CD4-positive, alpha-beta memory T cell (primary cell): ENCODE measurements at regions of chr10 and their contacts with region 1.

Region 1: DNA sequence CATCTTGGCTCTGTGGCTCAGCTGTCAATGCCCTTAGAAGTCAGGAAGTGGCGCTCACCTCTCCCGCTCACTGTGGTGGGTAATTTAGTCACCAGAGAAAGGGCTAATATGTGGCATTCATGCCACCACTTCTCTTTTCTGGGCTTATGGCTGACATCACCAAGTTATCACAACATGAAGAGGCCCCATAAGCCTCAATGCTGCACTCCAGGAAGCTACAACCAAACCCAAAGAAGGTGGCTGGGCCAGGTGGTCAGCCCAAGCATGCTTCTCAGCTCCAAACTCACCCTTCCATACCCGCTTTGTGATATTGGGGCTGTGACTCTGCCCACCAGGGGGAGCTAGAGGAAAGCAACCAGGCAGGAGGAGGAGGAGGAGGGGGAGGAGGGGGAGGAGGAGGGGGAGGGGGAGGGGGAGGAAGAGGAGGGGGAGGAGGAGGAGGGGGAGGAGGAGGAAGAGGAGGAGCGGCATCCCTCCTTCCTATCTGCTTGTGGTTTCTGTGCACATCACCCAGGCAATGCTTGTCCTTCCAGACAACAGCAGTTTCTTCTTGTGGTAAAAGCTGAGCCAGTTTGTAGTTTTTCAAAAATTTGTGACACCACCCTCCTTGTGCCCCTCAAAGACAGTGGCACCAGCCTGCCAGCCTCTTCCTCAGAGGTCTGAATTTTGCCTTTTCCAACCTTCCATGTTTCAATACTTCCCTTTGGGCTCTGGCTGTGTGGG is 42.1 kb downstream of the CYP26A1 start:
- DNase-seq: peak; percentile 64 to 75 (median 66)
- H3K4me3 ChIP-seq: no peak overlapping the region
- H3K4me3 Mint-ChIP-seq: peak overlapping the region in 3 of 8 donors; percentile 24 to 56 (median 34)
- H3K27ac ChIP-seq: no peak overlapping the region
- H3K27ac Mint-ChIP-seq: peak overlapping the region in 6 of 7 donors; percentile 29 to 80 (median 74)
- H3K4me1 ChIP-seq: peaks cover 14% of the 10 kb centered on the region
- H3K4me1 Mint-ChIP-seq: peaks cover 12 to 28% (median 17%) of the 10 kb centered on the region in 4 donors
- H3K27me3 ChIP-seq: no peaks in the 10 kb centered on the region
- H3K27me3 Mint-ChIP-seq: peaks cover 0 to 9% of the 10 kb centered on the region in 2 donors

Region 2: DNA sequence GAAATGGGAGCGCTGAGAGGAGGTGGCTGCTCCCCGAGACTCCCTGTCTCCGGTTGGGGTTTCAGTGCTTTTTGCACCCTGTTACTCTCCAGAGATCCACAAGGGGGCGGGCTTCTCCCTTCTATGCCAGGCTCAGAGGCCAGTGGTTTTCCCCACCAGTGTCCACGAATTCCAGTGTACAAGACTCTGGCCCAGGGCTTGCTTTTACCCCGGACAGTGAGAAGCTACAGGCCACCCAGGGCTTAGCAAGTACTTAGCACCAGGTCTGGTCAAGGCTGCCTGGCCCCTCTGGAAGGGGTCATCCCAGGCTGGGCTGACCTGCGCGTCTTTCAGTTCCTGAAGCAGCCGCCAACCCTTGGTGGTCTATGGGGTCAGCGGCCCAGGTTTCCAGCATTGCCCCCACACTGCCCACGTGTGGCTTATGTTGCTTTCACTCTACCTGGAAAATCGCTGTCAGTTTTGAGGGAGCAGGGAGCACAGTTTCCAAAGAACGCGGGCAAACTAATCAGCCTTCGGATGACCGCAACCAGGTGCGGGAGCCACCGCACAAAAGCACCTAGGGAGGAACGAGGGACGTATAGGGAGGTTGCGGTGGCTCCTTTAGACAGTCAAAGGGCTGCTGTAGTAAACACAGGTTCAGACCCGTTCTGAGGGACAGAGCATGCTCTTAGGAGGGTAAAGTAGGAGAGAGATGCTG is 35.3 kb before region 1 on chr10:
- CTCF ChIA-PET with region 1: interaction called, 15 read pairs
- POLR2A ChIA-PET with region 1: no interaction called
- intact Hi-C with region 1: no loop called
- DNase-seq: peak in 4 of 5 donors; percentile 43 to 47 (median 46)
- H3K4me3 ChIP-seq: no peak overlapping the region
- H3K4me3 Mint-ChIP-seq: peak overlapping the region in 4 of 8 donors; percentile 33 to 71 (median 62)
- H3K27ac ChIP-seq: no peak overlapping the region
- H3K27ac Mint-ChIP-seq: no peak overlapping the region
- H3K4me1 ChIP-seq: peaks cover 4% of the 10 kb centered on the region
- H3K4me1 Mint-ChIP-seq: peaks cover 2 to 10% (median 7%) of the 10 kb centered on the region in 4 donors
- H3K27me3 ChIP-seq: no peaks in the 10 kb centered on the region
- H3K27me3 Mint-ChIP-seq: peaks cover 17 to 39% of the 10 kb centered on the region in 2 donors

Region 3: DNA sequence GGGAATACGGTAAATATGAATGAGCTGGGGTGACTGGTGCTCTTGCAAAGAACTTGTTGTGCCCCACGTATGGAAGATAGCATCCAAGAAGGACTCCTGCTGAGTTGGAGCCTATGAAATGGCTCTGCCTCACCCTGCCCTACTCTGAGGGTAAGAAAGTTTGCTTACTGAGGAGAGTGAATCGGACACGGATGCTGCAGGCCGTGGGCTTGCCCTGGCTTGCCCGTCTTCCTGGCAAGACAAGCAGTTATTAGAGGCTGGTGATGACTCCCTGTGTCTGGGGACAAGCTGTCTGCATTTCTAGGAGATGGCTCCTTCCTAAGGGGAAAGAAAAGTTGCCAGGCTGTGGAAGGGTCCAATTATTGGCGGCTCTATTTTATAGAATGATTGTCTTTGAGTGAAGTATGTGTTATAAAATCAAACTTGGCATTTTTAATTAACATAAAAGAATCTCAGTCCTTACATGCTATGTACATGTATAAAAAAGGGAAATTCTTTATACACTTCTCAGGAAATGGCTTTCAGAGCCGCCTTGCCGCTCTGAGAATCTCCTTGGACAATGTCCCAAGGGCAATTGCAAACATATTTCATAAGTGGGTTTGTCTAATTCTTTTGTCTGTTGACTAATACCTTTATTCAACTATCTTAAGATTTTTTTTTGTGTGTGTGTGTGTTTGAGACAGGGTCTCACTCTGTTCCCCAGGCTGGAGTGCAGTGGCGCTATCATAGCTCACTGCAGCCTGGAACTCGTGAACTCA is 22.5 kb after region 1 on chr10:
- CTCF ChIA-PET with region 1: interaction called, 13 read pairs
- POLR2A ChIA-PET with region 1: no interaction called
- intact Hi-C with region 1: no loop called
- DNase-seq: no peak
- H3K4me3 ChIP-seq: no peak overlapping the region
- H3K4me3 Mint-ChIP-seq: no peak overlapping the region
- H3K27ac ChIP-seq: no peak overlapping the region
- H3K27ac Mint-ChIP-seq: no peak overlapping the region
- H3K4me1 ChIP-seq: no peaks in the 10 kb centered on the region
- H3K4me1 Mint-ChIP-seq: no peaks in the 10 kb centered on the region
- H3K27me3 ChIP-seq: no peaks in the 10 kb centered on the region
- H3K27me3 Mint-ChIP-seq: peaks cover 3 to 18% of the 10 kb centered on the region in 2 donors

Region 4: GRCh38 chr10:93152136-93152535 is 36.3 kb after region 1 on chr10:
- CTCF ChIA-PET with region 1: no interaction called
- POLR2A ChIA-PET with region 1: no interaction called
- intact Hi-C with region 1: no loop called
- DNase-seq: no peak
- H3K4me3 ChIP-seq: no peak overlapping the region
- H3K4me3 Mint-ChIP-seq: no peak overlapping the region
- H3K27ac ChIP-seq: no peak overlapping the region
- H3K27ac Mint-ChIP-seq: no peak overlapping the region
- H3K4me1 ChIP-seq: peaks cover 16% of the 10 kb centered on the region
- H3K4me1 Mint-ChIP-seq: peaks cover 12 to 22% (median 21%) of the 10 kb centered on the region in 4 donors
- H3K27me3 ChIP-seq: no peaks in the 10 kb centered on the region
- H3K27me3 Mint-ChIP-seq: peaks cover 6 to 10% of the 10 kb centered on the region in 2 donors

Region 5: GRCh38 chr10:93180482-93180931 is 64.7 kb after region 1 on chr10:
- CTCF ChIA-PET with region 1: no interaction called
- POLR2A ChIA-PET with region 1: no interaction called
- intact Hi-C with region 1: no loop called
- DNase-seq: no peak
- H3K4me3 ChIP-seq: no peak overlapping the region
- H3K4me3 Mint-ChIP-seq: no peak overlapping the region
- H3K27ac ChIP-seq: no peak overlapping the region
- H3K27ac Mint-ChIP-seq: no peak overlapping the region
- H3K4me1 ChIP-seq: no peaks in the 10 kb centered on the region
- H3K4me1 Mint-ChIP-seq: no peaks in the 10 kb centered on the region
- H3K27me3 ChIP-seq: no peaks in the 10 kb centered on the region
- H3K27me3 Mint-ChIP-seq: peaks cover 2 to 4% of the 10 kb centered on the region in 2 donors

Region 6: GRCh38 chr10:93288654-93289634 is 173.1 kb after region 1 on chr10:
- CTCF ChIA-PET with region 1: interaction called, 16 read pairs
- POLR2A ChIA-PET with region 1: no interaction called
- intact Hi-C with region 1: loop called (anchors 1 kb)
- DNase-seq: peak; percentile 33 to 43 (median 41)
- H3K4me3 ChIP-seq: no peak overlapping the region
- H3K4me3 Mint-ChIP-seq: no peak overlapping the region
- H3K27ac ChIP-seq: no peak overlapping the region
- H3K27ac Mint-ChIP-seq: no peak overlapping the region
- H3K4me1 ChIP-seq: no peaks in the 10 kb centered on the region
- H3K4me1 Mint-ChIP-seq: no peaks in the 10 kb centered on the region
- H3K27me3 ChIP-seq: no peaks in the 10 kb centered on the region
- H3K27me3 Mint-ChIP-seq: no peaks in the 10 kb centered on the region